ENCODE measurements at regions of chr11 and their contacts with region 1.

Region 1: GRCh38 chr11:78188286-78189173 is at the starts of genes KCTD21 and USP35:
- DNase-seq: peak; percentile 97 to 99 (median 99)
- ATAC-seq: peak; percentile 97 to 98 (median 98)
- H3K4me3 ChIP-seq: peak within 1 kb of the TSS; percentile 71 to 96 (median 88)
- H3K27ac ChIP-seq: peak within 1 kb of the TSS in 11 of 12 donors; percentile 82 to 95 (median 89)
- H3K4me1 ChIP-seq: peaks cover 2 to 53% (median 37%) of the 10 kb centered on the region in 12 donors
- H3K27me3 ChIP-seq: no peaks in the 10 kb centered on the region
- CTCF ChIP-seq: no peak
- POLR2A ChIP-seq: peak in 1 of 2 donors; percentile 83
- total RNA-seq, gene KCTD21: 5.6 to 10.9 (median 7.2) TPM
- total RNA-seq, gene USP35: 4.5 to 8.1 (median 5.3) TPM

Region 2: GRCh38 chr11:77994412-77995362 is 193.8 kb before region 1 on chr11 and contains the start of gene INTS4:
- intact Hi-C with region 1: loop called in 1 of 10 experiments (anchors 5 kb)
- DNase-seq: peak; percentile 99 to 100 (median 99)
- ATAC-seq: peak; percentile 99
- H3K4me3 ChIP-seq: peak within 1 kb of the TSS; percentile 35 to 91 (median 72)
- H3K27ac ChIP-seq: peak within 1 kb of the TSS in 11 of 12 donors; percentile 73 to 92 (median 84)
- H3K4me1 ChIP-seq: peaks cover 0 to 27% (median 17%) of the 10 kb centered on the region in 12 donors
- H3K27me3 ChIP-seq: no peaks in the 10 kb centered on the region
- CTCF ChIP-seq: no peak
- POLR2A ChIP-seq: peak; percentile 11 to 59
- total RNA-seq, gene INTS4: 11.6 to 23.9 (median 15.6) TPM

Region 3: GRCh38 chr11:78079232-78080083 is 109.1 kb before region 1 on chr11 and contains the start of gene NDUFC2:
- intact Hi-C with region 1: loop called in 4 of 10 experiments (anchors 2 to 10 kb)
- DNase-seq: peak; percentile 78 to 90 (median 84)
- ATAC-seq: peak; percentile 94 to 96 (median 94)
- H3K4me3 ChIP-seq: peak within 1 kb of the TSS; percentile 74 to 100 (median 90)
- H3K27ac ChIP-seq: peak within 1 kb of the TSS; percentile 65 to 93 (median 86)
- H3K4me1 ChIP-seq: peaks cover 0 to 51% (median 34%) of the 10 kb centered on the region in 12 donors
- H3K27me3 ChIP-seq: no peaks in the 10 kb centered on the region
- CTCF ChIP-seq: no peak
- POLR2A ChIP-seq: peak in 1 of 2 donors; percentile 64
- total RNA-seq, gene NDUFC2: 164 to 330 (median 258) TPM

Region 4: DNA sequence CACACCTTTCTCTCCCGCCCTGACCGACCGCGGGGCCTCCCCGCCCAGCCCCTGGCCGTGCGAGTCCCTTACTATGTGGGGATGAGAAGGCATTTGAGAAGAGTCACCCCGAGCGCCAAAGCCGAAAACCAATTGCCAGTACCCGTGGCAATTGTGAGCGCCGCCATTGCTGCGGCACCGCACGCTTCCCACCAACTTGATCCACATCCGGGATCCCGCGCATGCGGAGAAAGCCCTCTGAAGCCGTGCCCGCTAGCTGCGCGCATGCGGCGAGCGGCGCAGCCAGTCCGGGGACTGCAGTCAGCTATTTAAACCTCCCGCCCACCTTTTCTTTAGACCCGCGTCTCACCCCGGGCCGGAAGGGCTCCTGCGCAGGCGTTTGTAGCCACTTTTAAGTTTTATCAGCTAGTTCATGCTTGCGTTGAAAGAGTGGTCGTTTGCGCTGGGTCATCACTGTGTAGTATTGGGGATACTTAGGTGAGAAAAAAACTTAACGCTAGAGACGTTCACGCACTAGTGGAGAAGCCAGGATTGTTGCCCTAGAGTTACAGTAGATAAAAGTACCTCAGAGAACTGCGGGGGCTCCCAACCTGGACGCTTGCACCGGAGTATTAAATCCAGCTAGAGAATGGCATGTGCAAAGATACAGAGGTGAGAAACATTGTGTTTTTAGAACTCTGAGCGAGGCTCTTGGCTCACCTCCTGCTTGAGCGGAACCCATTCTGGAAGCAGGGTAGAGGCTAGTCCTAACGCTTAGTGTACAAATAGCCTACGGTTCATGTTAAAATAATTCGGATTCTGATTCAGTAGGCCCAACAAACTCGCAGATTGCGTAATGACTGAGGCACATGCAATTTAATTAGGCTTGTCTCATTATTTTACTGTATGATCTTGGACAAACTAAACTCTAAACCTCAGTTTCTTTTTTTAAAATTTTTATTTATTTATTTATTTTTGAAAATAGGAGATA is 48.8 kb before region 1 on chr11 and contains the start of gene ALG8:
- intact Hi-C with region 1: loop called in 5 of 10 experiments (anchors 2 to 5 kb)
- DNase-seq: peak; percentile 95 to 98 (median 96)
- ATAC-seq: peak; percentile 97 to 99 (median 99)
- H3K4me3 ChIP-seq: peak within 1 kb of the TSS; percentile 47 to 88 (median 73)
- H3K27ac ChIP-seq: peak within 1 kb of the TSS; percentile 20 to 79 (median 74)
- H3K4me1 ChIP-seq: peaks cover 0 to 28% (median 14%) of the 10 kb centered on the region in 12 donors
- H3K27me3 ChIP-seq: no peaks in the 10 kb centered on the region
- CTCF ChIP-seq: no peak
- POLR2A ChIP-seq: peak in 1 of 2 donors; percentile 59
- total RNA-seq, gene ALG8: 14.1 to 24.6 (median 17.7) TPM

Region 5: DNA sequence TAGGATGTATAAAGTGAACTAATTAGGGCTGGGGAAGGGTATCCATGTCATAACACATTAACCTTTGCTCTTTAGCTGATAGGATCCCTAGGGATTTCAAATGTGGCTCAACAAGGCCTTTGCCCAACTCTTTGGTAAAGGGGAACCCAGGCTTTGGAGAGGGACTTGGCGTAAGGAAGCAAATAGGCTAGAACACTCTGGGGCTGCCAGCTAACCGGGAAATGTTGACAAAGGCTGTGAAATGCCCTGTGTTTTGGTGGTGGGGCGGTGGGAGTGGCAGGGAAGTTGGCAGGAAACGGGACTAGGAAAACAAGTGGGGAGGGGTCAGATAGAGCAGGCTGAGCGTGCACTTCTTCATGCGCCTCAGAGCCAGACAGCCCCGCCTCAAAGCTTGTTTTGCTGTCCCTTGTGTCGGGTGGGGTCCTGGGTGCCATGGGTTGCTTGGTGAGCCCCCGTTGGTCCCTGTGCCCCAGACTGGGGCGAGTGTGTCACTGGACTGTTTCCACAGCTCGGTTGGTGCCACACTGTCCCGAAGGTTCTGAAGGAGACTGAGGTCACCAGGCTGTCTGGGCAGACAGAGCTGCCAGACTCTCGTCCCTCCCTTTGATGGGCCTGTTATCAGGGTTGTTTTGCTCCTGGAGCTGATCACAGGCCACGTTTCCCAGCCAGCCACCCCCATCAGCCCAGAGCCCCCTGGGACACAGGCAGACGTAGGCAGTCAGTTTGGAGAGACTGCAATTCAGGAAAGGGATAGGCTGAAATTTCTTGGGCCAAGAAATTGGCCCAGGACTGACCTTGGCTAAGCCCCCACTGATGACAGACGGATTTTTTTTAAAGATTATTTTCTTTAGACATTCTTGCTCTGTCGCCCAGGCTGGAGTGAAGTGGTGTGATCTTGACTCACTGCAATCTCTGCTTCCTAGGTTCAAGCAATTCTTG is 19.7 kb before region 1 on chr11:
- intact Hi-C with region 1: loop called in 3 of 10 experiments (anchors 1 kb)
- DNase-seq: peak; percentile 89 to 93 (median 91)
- ATAC-seq: peak; percentile 93 to 96 (median 94)
- H3K4me3 ChIP-seq: peak overlapping the region in 4 of 12 donors; percentile 0 to 17 (median 6)
- H3K27ac ChIP-seq: peak overlapping the region; percentile 78 to 92 (median 82)
- H3K4me1 ChIP-seq: peaks cover 0 to 47% (median 28%) of the 10 kb centered on the region in 12 donors
- H3K27me3 ChIP-seq: no peaks in the 10 kb centered on the region
- CTCF ChIP-seq: no peak
- POLR2A ChIP-seq: peak in 1 of 2 donors; percentile 44